A673 (cell line): ENCODE measurements at regions of chr2 and their contacts with region 1.

Region 1: DNA sequence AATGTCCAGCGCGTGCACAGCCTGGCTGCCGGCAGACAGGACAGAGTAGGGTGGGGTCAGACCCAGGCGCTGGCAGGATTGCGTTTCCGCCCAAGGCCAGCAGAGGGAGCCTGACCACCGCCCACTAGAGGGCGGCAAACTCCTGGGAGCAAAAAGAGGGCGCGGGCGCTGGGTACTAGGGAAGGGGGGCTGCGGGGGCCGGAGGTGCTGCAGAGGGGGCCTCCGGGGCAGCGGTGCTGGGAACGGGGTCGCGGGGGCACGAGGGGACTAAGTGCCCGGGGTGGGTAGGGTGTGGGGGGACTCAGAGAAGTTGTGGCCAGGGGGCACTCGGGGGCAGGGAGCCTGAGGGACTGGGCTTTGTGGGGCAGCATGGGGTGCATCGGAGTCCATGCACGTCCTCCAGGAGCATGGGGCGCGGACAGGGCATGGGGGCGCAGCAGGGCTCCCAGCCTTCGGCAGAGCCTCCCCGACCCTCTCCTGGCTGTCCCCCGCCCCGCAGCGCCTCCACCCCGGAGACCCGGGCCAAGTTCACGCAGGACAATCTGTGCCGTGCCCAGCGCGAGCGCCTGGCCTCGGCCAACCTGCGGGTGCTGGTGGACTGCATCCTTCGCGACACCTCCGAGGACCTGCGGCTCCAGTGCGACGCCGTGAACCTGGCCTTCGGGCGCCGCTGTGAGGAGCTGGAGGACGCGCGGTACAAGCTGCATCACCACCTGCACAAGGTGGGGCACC is 3.2 kb downstream of the TEKT4 start:
- DNase-seq: peak; percentile 59
- H3K4me3 ChIP-seq: no peak overlapping the region
- H3K27ac ChIP-seq: no peak overlapping the region
- H3K4me1 ChIP-seq: no peaks in the 10 kb centered on the region
- H3K27me3 ChIP-seq: peaks cover 21% of the 10 kb centered on the region
- CTCF ChIP-seq: peak; percentile 99

Region 2: GRCh38 chr2:94956797-94957391 is 82.5 kb after region 1 on chr2:
- CTCF ChIA-PET with region 1: no interaction called
- POLR2A ChIA-PET with region 1: no interaction called
- intact Hi-C with region 1: loop called (anchors 2 kb)
- DNase-seq: peak; percentile 50
- H3K4me3 ChIP-seq: no peak overlapping the region
- H3K27ac ChIP-seq: no peak overlapping the region
- H3K4me1 ChIP-seq: no peaks in the 10 kb centered on the region
- H3K27me3 ChIP-seq: peaks cover 39% of the 10 kb centered on the region
- CTCF ChIP-seq: peak; percentile 83